PC-9 (cell line): ENCODE measurements at regions of chr16 and their contacts with region 1.

Region 1: GRCh38 chr16:67017810-67018488 is 11.0 kb upstream of the CBFB start:
- DNase-seq: peak; percentile 86 to 88
- H3K4me3 ChIP-seq: no peak overlapping the region
- H3K27ac ChIP-seq: no peak overlapping the region
- H3K4me1 ChIP-seq: peaks cover 7% of the 10 kb centered on the region
- H3K27me3 ChIP-seq: peaks cover 19% of the 10 kb centered on the region
- CTCF ChIP-seq: peak; percentile 85

Region 2: GRCh38 chr16:66894948-66895688 is 122.8 kb before region 1 on chr16:
- CTCF ChIA-PET with region 1: no interaction called
- POLR2A ChIA-PET with region 1: no interaction called
- intact Hi-C with region 1: loop called (anchors 2 kb)
- DNase-seq: peak in 1 of 2 experiments; percentile 66
- H3K4me3 ChIP-seq: no peak overlapping the region
- H3K27ac ChIP-seq: no peak overlapping the region
- H3K4me1 ChIP-seq: peaks cover 24% of the 10 kb centered on the region
- H3K27me3 ChIP-seq: no peaks in the 10 kb centered on the region
- CTCF ChIP-seq: peak; percentile 87

Region 3: DNA sequence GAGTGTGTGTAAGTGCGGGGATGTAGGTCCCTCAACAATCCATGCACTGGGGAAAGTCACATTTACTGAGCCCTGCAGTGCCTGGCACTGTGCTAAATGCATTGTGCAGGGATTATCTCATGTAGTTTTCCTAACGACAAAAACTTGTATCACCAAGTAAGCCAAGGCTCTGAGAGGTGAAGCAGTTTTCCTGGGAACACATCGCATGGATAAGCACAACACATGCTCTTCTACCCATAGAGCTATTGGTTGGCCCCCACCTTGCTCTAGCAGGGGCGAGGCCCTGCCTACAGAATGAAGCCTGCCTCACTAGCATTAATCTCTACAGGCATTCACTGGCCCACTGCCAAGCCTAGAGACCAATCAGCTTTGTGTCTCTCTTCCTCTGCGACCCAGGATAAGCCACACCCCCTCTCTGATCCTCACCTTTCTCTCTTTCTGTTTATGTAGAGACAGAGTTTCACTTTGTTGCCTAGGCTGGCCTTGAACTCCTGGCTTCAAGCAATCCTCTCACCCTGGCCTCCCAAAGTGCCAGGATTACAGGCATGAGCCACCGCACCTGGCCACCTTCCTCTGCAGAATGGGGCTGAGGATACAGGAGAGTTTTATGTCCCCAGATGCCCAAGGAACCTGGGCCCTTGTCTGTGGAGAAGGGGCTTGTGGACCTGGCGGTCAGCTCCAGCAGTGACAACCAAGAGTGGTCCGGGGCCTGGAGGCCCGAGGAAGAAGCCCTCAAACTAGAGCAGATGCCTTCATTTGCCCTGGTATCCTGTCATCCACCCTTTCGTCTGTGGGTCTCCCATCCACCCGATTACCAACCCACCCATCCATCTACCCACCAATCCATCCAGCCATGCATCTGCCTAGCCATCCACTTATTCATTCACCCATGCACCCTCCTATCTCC is 112.1 kb before region 1 on chr16:
- CTCF ChIA-PET with region 1: no interaction called
- POLR2A ChIA-PET with region 1: no interaction called
- intact Hi-C with region 1: no loop called
- DNase-seq: peak in 1 of 2 experiments; percentile 50
- H3K4me3 ChIP-seq: no peak overlapping the region
- H3K27ac ChIP-seq: no peak overlapping the region
- H3K4me1 ChIP-seq: peaks cover 7% of the 10 kb centered on the region
- H3K27me3 ChIP-seq: no peaks in the 10 kb centered on the region
- CTCF ChIP-seq: no peak

Region 4: DNA sequence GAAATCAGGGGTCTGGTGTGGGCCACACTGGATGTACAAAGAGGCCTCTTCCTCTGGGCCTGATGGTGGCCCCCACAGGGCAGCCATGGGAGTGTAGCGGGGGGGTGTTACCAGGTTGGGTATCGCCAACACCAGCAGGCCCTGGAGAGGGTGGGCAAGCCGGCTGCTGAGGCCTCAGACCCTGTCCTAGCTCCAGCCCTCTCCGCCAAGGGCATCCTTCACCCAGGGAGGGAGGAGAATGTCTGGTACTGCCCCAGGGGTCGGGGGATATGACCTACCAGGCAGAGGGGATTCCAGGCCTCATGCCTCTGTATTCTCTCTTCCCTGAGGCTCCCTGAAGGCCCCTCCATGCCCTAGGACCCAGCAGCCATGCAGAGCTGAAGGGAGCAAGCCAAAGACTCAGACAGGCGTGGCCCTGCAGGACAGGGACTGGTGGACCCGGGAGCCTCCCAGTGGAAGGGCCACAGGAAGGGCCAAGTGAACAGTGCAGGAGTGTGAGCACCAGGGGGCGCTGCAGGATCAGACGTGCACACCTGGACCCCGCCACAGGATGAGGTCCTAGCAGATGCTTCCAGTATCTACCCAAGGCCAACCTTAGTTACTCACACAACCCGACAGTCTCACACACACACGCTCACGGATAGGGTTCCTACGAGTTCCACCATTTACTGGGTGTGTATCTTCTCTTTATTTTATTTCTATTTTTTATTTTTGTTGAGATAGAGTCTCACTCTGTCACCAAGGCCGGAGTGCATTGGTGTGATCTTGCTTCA is 40.4 kb before region 1 on chr16:
- CTCF ChIA-PET with region 1: no interaction called
- POLR2A ChIA-PET with region 1: no interaction called
- intact Hi-C with region 1: loop called (anchors 1 kb)
- DNase-seq: peak; percentile 62 to 82
- H3K4me3 ChIP-seq: no peak overlapping the region
- H3K27ac ChIP-seq: no peak overlapping the region
- H3K4me1 ChIP-seq: no peaks in the 10 kb centered on the region
- H3K27me3 ChIP-seq: no peaks in the 10 kb centered on the region
- CTCF ChIP-seq: peak; percentile 96

Region 5: DNA sequence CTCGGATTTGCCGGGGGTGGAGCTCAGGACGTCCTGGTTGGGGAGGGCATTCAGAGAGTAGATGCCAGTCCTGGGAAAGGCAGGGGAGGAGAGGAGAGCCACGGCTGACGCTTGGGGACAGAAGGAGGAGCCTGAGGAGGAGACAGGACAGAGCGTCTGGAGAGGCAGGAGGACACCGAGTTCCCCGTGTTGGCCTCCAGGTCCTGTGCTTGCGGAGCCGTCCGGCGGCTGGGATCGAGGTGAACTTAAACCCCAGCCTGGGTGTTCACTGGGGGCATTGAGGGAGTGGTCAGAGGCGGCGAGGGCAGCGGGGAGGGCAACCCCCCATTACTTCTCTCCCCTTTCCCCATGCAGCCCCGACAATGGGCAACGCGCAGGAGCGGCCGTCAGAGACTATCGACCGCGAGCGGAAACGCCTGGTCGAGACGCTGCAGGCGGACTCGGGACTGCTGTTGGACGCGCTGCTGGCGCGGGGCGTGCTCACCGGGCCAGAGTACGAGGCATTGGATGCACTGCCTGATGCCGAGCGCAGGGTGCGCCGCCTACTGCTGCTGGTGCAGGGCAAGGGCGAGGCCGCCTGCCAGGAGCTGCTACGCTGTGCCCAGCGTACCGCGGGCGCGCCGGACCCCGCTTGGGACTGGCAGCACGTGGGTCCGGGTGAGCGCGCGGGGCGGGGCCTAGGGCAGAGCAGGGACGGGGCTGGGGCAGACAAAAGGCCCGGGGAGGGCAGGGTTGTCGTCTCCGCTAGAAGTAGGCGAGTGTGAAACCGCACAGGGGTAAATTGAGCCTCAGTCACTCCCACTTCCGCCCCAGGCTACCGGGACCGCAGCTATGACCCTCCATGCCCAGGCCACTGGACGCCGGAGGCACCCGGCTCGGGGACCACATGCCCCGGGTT is 156.1 kb after region 1 on chr16:
- CTCF ChIA-PET with region 1: interaction called, 4 read pairs
- POLR2A ChIA-PET with region 1: interaction called, 12 read pairs
- intact Hi-C with region 1: loop called (anchors 5 kb)
- DNase-seq: peak; percentile 85 to 93
- H3K4me3 ChIP-seq: peak overlapping the region; percentile 57
- H3K27ac ChIP-seq: peak overlapping the region; percentile 64
- H3K4me1 ChIP-seq: peaks cover 56% of the 10 kb centered on the region
- H3K27me3 ChIP-seq: no peaks in the 10 kb centered on the region
- CTCF ChIP-seq: no peak; the same call in 1 of the 2 replicates

Region 6: GRCh38 chr16:67428146-67428731 is 410.3 kb after region 1 on chr16:
- CTCF ChIA-PET with region 1: interaction called, 13 read pairs
- POLR2A ChIA-PET with region 1: no interaction called
- intact Hi-C with region 1: no loop called
- DNase-seq: peak; percentile 59 to 74
- H3K4me3 ChIP-seq: no peak overlapping the region
- H3K27ac ChIP-seq: no peak overlapping the region
- H3K4me1 ChIP-seq: no peaks in the 10 kb centered on the region; the same call in none of the 2 replicates
- H3K27me3 ChIP-seq: no peaks in the 10 kb centered on the region
- CTCF ChIP-seq: peak; percentile 79